ENCODE measurements at regions of chr3 and their contacts with region 1.

Region 1: GRCh38 chr3:167493244-167493643 is 19.4 kb upstream of the SERPINI2 start:
- DNase-seq: peak; percentile 3
- H3K4me3 ChIP-seq: no peak overlapping the region
- H3K27ac ChIP-seq: no peak overlapping the region
- H3K4me1 ChIP-seq: peaks cover 6% of the 10 kb centered on the region
- CTCF ChIP-seq: peak; percentile 74

Region 2: DNA sequence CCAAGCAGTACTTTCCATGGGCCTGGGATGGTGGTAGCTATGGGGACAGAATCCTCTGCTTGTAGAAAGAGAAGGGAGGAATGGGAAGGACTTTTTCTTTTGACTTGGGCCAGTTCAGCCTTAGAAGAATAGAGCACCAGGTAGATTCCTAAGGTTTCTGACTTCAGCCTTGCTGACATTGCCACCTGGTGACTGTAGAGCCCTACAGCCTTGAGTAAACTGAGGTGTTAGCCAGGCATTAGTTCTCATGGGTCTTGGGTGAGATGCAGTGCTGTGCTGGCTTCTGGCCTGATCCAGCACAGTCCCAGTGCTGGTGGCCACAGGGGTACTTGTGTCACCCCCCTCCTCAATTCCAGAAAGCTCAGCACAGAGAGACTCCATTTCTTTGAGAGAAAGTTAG is 284.2 kb before region 1 on chr3:
- CTCF ChIA-PET with region 1: no interaction called
- POLR2A ChIA-PET with region 1: no interaction called
- intact Hi-C with region 1: no loop called
- DNase-seq: no peak
- H3K4me3 ChIP-seq: no peak overlapping the region
- H3K27ac ChIP-seq: no peak overlapping the region
- H3K4me1 ChIP-seq: no peaks in the 10 kb centered on the region
- CTCF ChIP-seq: no peak

Region 3: GRCh38 chr3:167480748-167481147 is 12.5 kb before region 1 on chr3:
- CTCF ChIA-PET with region 1: no interaction called
- POLR2A ChIA-PET with region 1: interaction called, 10 read pairs
- intact Hi-C with region 1: no loop called
- DNase-seq: no peak
- H3K4me3 ChIP-seq: no peak overlapping the region
- H3K27ac ChIP-seq: no peak overlapping the region
- H3K4me1 ChIP-seq: no peaks in the 10 kb centered on the region
- CTCF ChIP-seq: no peak

Measured in OCI-LY7 (cell line).